CD8-positive, alpha-beta T cell (primary cell): ENCODE measurements at regions of chr13 and their contacts with region 1.

Region 1: DNA sequence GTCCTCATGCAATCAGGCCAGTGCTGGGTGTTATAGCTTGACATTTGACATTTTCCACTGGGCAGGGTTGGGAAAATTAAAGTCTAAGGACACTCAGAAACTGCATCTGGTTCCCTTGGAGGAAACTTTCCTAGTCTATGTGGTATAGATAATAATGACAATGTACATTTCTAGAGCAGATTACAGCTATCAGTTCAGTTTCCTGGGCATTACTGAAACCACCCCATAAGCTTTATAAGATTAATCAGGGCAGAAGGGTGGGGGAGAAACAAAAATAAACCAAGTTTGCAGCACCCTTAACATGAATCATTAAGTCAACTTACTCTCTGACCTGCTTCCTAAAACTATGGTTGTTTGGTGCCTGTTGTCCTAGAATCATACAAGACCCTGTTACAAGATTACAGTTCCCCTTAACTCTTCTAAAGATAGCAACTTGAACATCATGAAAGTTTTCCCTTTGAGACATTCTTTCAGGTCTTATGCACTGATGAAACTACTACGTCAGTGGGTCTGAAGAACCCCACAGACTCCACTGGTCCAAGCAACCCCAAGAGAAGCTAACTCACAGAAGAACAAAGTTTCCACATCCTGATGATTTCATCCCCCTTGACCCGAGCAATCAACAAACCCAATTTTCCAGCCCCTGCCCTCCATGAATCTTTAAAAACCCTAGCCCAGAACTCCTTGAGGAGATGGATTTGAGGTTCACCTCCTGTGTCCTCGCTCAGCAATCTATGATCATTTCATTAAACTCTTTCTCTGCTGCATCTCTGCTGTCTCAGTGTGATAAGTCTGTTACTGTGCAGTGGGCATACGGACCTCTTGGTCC is 336.6 kb downstream of the FOXO1 start:
- DNase-seq: no peak
- ATAC-seq: no peak
- H3K4me3 ChIP-seq: no peak overlapping the region
- H3K4me3 Mint-ChIP-seq: no peak overlapping the region
- H3K27ac ChIP-seq: no peak overlapping the region
- H3K27ac Mint-ChIP-seq: no peak overlapping the region
- H3K4me1 ChIP-seq: peaks cover 22% of the 10 kb centered on the region
- H3K4me1 Mint-ChIP-seq: peaks cover 31% of the 10 kb centered on the region
- H3K27me3 ChIP-seq: no peaks in the 10 kb centered on the region
- H3K27me3 Mint-ChIP-seq: no peaks in the 10 kb centered on the region
- CTCF ChIP-seq: no peak

Region 2: GRCh38 chr13:40377783-40378182 is 47.9 kb after region 1 on chr13:
- CTCF ChIA-PET with region 1: no interaction called
- POLR2A ChIA-PET with region 1: interaction called, 3 read pairs
- intact Hi-C with region 1: loop called in 1 of 2 experiments (anchors 10 kb)
- DNase-seq: peak in 1 of 9 experiments; percentile 51
- ATAC-seq: peak; percentile 66
- H3K4me3 ChIP-seq: no peak overlapping the region
- H3K4me3 Mint-ChIP-seq: no peak overlapping the region
- H3K27ac ChIP-seq: no peak overlapping the region
- H3K27ac Mint-ChIP-seq: no peak overlapping the region
- H3K4me1 ChIP-seq: peaks cover 27% of the 10 kb centered on the region
- H3K4me1 Mint-ChIP-seq: peaks cover 52% of the 10 kb centered on the region
- H3K27me3 ChIP-seq: no peaks in the 10 kb centered on the region
- H3K27me3 Mint-ChIP-seq: no peaks in the 10 kb centered on the region
- CTCF ChIP-seq: no peak

Region 3: GRCh38 chr13:40666045-40666904 is 336.4 kb after region 1 on chr13 and contains the start of gene FOXO1:
- CTCF ChIA-PET with region 1: no interaction called
- POLR2A ChIA-PET with region 1: no interaction called
- intact Hi-C with region 1: no loop called
- DNase-seq: peak; percentile 83 to 95 (median 91)
- ATAC-seq: peak; percentile 77
- H3K4me3 ChIP-seq: peak within 1 kb of the TSS; percentile 88 to 96
- H3K4me3 Mint-ChIP-seq: peak within 1 kb of the TSS; percentile 93
- H3K27ac ChIP-seq: peak within 1 kb of the TSS; percentile 75 to 83
- H3K27ac Mint-ChIP-seq: peak within 1 kb of the TSS; percentile 96
- H3K4me1 ChIP-seq: peaks cover 28% of the 10 kb centered on the region
- H3K4me1 Mint-ChIP-seq: peaks cover 40% of the 10 kb centered on the region
- H3K27me3 ChIP-seq: no peaks in the 10 kb centered on the region
- H3K27me3 Mint-ChIP-seq: no peaks in the 10 kb centered on the region
- CTCF ChIP-seq: no peak
- total RNA-seq, gene FOXO1: 97.2 to 97.3 TPM